Activated CD4-positive, alpha-beta T cell treated with anti-CD3 and anti-CD28 coated beads for 36 hours (primary cell): ENCODE measurements at regions of chr2 and their contacts with region 1.

Region 1: GRCh38 chr2:32168513-32168912 is 2.8 kb downstream of the SLC30A6 start:
- DNase-seq: no peak
- ATAC-seq: no peak
- H3K4me3 Mint-ChIP-seq: no peak overlapping the region
- H3K27ac Mint-ChIP-seq: peak overlapping the region; percentile 38
- H3K4me1 Mint-ChIP-seq: peaks cover 39% of the 10 kb centered on the region
- H3K27me3 Mint-ChIP-seq: no peaks in the 10 kb centered on the region

Region 2: GRCh38 chr2:32039447-32040219 is 128.9 kb before region 1 on chr2 and contains the start of gene DPY30:
- CTCF ChIA-PET with region 1: no interaction called
- POLR2A ChIA-PET with region 1: interaction called, 12 read pairs
- intact Hi-C with region 1: loop called in 1 of 2 experiments (anchors 1 kb)
- DNase-seq: peak; percentile 95
- ATAC-seq: peak; percentile 94
- H3K4me3 Mint-ChIP-seq: peak within 1 kb of the TSS; percentile 90
- H3K27ac Mint-ChIP-seq: peak within 1 kb of the TSS; percentile 96
- H3K4me1 Mint-ChIP-seq: peaks cover 11% of the 10 kb centered on the region
- H3K27me3 Mint-ChIP-seq: no peaks in the 10 kb centered on the region
- total RNA-seq, gene DPY30: 74.2 to 78.6 TPM

Region 3: DNA sequence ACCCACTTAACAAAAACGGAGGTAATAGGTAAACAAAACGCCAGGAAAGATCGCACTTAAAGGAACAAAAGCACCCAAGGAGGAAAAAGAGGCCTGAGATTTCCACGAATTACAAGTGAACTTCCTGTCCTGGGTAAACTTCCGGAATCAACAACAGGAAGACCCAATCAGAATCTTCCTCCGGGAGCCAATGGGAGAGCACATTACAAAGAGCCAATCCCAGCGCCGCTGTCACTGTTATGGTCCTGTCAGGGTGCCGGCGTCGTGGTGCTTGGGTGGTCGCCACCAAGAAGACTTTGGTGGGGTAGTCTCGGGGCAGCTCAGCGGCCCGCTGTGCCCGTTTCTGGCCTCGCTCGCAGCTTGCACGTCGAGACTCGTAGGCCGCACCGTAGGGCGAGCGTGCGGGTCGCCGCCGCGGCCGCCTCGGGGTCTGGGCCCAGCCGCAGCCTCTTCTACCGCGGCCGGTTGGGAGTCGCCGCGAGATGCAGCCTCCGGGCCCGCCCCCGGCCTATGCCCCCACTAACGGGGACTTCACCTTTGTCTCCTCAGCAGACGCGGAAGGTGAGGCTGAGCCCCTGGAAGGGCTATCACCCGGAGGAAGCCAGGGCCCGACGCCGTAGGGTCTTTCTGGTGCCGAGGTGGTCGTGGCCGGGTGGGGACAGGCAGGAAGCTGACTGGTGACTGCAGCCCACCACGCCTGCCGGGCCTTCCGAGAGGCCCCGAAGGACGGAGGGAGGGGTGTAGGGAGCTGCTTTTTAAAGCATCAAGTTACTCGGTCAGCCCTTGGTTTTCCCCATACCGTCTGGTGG is 109.4 kb after region 1 on chr2 and contains the start of gene YIPF4:
- CTCF ChIA-PET with region 1: no interaction called
- POLR2A ChIA-PET with region 1: no interaction called
- intact Hi-C with region 1: loop called (anchors 1 to 5 kb)
- DNase-seq: peak; percentile 89
- ATAC-seq: peak; percentile 99
- H3K4me3 Mint-ChIP-seq: peak within 1 kb of the TSS; percentile 94
- H3K27ac Mint-ChIP-seq: peak within 1 kb of the TSS; percentile 93
- H3K4me1 Mint-ChIP-seq: peaks cover 24% of the 10 kb centered on the region
- H3K27me3 Mint-ChIP-seq: no peaks in the 10 kb centered on the region
- total RNA-seq, gene YIPF4: 17.5 to 37.6 TPM